ENCODE measurements at regions of chr5 and their contacts with region 1.

Region 1: DNA sequence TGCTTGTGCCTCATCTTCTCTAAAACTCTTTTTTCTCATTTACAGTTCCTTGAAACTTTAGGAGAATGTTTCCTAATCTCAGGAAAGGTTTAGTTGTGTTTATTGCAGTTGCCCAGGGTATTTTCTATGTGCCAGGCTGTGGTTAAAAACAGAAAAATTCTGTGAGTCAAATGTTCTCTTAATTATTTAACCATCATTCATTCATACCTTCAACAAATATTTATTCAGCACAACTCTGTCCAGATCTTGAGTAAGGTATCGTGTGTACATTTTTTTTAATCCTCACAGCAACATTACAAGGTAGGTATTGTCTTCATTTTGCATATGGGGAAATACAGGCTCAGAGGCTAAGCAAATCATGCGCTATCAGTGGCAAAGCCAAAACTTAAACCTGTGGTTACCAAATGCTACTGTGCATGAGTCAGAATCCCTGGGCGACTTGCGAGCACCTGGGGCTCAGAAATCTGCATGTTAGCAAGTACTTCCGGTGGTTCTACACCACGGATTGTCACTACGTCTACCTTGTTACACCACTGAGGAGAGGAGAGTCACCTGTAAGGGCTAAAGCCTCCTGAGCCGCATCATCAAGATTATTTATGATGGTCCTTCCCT is 21.2 kb downstream of the C5orf58 start:
- DNase-seq: no peak
- ATAC-seq: no peak
- H3K4me3 ChIP-seq: no peak overlapping the region
- H3K27ac ChIP-seq: no peak overlapping the region
- H3K4me1 ChIP-seq: no peaks in the 10 kb centered on the region
- CTCF ChIP-seq: no peak
- EP300 ChIP-seq: no peak
- POLR2A ChIP-seq: no peak
- RAD21 ChIP-seq: no peak

Region 2: GRCh38 chr5:170190436-170191134 is 63.4 kb before region 1 on chr5:
- CTCF ChIA-PET with region 1: no interaction called
- POLR2A ChIA-PET with region 1: no interaction called
- DNase-seq: no peak
- ATAC-seq: no peak
- H3K4me3 ChIP-seq: no peak overlapping the region
- H3K27ac ChIP-seq: no peak overlapping the region
- H3K4me1 ChIP-seq: no peaks in the 10 kb centered on the region
- CTCF ChIP-seq: no peak
- EP300 ChIP-seq: no peak
- POLR2A ChIP-seq: no peak
- RAD21 ChIP-seq: no peak

Region 3: DNA sequence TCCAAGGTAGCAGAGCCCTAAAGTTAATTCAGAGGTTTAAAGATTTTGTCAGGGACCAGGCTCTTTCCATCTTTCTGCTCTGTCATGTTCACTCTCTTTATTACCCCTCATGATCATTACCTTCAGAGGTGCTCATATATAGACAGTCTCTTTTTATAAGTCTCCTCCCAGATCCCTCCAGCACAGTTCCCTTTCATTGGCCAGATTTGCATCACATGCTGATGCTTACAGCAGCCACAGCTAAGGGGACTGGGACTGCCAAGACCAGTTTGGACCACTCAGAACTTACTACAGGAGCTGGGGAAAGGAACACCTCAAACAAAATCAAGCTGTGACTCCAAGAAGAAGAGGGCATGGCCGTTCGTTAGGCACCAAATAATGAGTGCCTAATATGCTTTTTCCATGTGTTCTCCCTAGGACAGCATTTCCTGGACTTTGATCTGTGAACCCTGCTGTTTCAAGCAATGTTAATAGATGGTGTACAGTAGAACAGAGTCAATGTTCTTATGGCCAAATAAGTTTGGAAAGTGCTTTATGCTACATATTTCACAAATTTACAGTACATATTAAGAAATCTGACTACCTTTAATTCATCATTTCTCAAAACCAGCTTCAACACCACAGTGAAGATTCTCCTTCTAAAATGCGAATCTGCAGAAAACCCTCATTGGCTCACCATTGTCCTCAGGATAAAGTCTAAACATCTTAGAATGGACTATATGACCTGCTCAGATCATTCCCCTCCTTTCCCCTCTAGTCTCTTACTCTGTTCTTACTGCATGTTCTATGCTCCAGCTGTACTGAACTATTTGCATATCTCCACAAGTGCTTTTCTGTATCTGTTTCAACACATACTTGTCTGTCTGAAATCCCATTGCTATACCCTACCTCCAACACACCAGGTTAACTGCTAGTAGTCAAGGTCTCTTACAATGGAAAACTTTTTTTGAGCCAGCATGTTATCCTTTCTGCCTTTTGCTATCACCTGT is 17.8 kb before region 1 on chr5:
- CTCF ChIA-PET with region 1: no interaction called
- POLR2A ChIA-PET with region 1: no interaction called
- DNase-seq: no peak
- ATAC-seq: no peak
- H3K4me3 ChIP-seq: no peak overlapping the region
- H3K27ac ChIP-seq: no peak overlapping the region
- H3K4me1 ChIP-seq: no peaks in the 10 kb centered on the region
- CTCF ChIP-seq: no peak
- EP300 ChIP-seq: no peak
- POLR2A ChIP-seq: no peak
- RAD21 ChIP-seq: no peak

Region 4: GRCh38 chr5:170267431-170268152 is 13.6 kb after region 1 on chr5:
- CTCF ChIA-PET with region 1: interaction called, 27 read pairs
- POLR2A ChIA-PET with region 1: no interaction called
- DNase-seq: peak; percentile 76 to 79
- ATAC-seq: peak; percentile 94 to 98
- H3K4me3 ChIP-seq: no peak overlapping the region
- H3K27ac ChIP-seq: no peak overlapping the region
- H3K4me1 ChIP-seq: no peaks in the 10 kb centered on the region
- CTCF ChIP-seq: peak; percentile 85
- EP300 ChIP-seq: no peak
- POLR2A ChIP-seq: no peak
- RAD21 ChIP-seq: peak; percentile 61 to 69; a peak in 4 of 5 replicates